Ascending aorta (tissue), 2 donors: ENCODE measurements at regions of chr2 and their contacts with region 1.

Region 1: DNA sequence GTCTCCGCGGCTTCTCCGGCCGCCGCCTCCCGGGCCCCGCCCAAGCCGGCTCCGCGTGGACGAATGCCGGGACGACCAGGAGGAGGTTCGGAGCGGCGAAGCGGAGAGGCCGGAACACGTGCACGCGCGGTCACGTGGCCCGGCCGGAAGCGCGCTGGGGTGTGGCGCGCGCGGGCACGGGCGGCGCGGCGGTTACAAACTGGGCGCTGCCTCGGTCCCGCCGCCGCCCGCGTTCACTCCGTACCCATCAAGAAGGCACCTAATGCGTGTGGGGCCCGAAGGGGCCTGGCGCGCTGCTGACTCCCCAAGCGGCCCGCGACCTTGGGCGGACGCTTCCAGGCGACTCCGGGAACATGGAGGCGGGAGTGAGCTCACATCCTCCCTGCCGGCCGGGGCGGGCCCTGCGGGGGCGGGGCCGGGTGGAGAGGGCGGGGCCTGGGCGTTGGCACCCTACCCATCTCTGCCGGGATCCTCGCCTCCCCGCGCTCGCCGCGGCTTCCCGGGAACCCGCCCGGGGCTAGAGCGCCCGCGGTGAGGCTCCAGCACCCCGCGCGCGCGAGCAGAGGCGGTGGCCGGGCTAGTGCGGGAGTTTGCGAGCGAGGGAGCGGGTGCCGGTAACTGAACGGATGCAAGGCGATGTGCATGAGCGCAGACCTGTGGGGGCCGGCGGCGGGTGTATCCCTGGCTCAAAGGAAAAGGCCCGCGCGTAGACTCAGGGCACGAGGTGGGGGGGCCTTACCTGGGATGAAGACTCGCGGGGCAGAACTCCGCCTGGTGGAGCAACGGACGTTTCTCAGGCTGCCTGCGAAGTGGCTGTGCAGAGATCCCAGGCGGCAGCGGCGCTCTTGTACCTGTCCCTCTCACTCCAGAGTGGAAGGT is at the start of gene TMEM185B:
- DNase-seq: peak; percentile 63 to 94
- H3K4me3 ChIP-seq: peak within 1 kb of the TSS; percentile 65 to 76
- H3K27ac ChIP-seq: peak within 1 kb of the TSS; percentile 82 to 89
- H3K4me1 ChIP-seq: peaks cover 0 to 10% of the 10 kb centered on the region in 2 donors
- H3K27me3 ChIP-seq: no peaks in the 10 kb centered on the region
- CTCF ChIP-seq: peak in 2 of 3 experiments; percentile 19 to 20
- total RNA-seq, gene TMEM185B: 31.8 TPM

Region 2: GRCh38 chr2:120012771-120013596 is 210.3 kb before region 1 on chr2 and contains the start of gene EPB41L5:
- intact Hi-C with region 1: loop called (anchors 10 kb)
- DNase-seq: peak; percentile 41 to 93
- H3K4me3 ChIP-seq: peak within 1 kb of the TSS; percentile 79 to 97
- H3K27ac ChIP-seq: peak within 1 kb of the TSS; percentile 88 to 91
- H3K4me1 ChIP-seq: no peaks in the 10 kb centered on the region
- H3K27me3 ChIP-seq: no peaks in the 10 kb centered on the region
- CTCF ChIP-seq: no peak
- total RNA-seq, gene EPB41L5: 11.7 TPM

Region 3: GRCh38 chr2:120539937-120540718 is 316.9 kb after region 1 on chr2:
- intact Hi-C with region 1: loop called (anchors 10 kb)
- DNase-seq: peak; percentile 59 to 96
- H3K4me3 ChIP-seq: peak overlapping the region in 1 of 2 donors; percentile 2
- H3K27ac ChIP-seq: peak overlapping the region; percentile 9 to 43
- H3K4me1 ChIP-seq: peaks cover 10 to 19% of the 10 kb centered on the region in 2 donors
- H3K27me3 ChIP-seq: no peaks in the 10 kb centered on the region
- CTCF ChIP-seq: no peak